ENCODE measurements at regions of chr7 and their contacts with region 1.

Region 1: DNA sequence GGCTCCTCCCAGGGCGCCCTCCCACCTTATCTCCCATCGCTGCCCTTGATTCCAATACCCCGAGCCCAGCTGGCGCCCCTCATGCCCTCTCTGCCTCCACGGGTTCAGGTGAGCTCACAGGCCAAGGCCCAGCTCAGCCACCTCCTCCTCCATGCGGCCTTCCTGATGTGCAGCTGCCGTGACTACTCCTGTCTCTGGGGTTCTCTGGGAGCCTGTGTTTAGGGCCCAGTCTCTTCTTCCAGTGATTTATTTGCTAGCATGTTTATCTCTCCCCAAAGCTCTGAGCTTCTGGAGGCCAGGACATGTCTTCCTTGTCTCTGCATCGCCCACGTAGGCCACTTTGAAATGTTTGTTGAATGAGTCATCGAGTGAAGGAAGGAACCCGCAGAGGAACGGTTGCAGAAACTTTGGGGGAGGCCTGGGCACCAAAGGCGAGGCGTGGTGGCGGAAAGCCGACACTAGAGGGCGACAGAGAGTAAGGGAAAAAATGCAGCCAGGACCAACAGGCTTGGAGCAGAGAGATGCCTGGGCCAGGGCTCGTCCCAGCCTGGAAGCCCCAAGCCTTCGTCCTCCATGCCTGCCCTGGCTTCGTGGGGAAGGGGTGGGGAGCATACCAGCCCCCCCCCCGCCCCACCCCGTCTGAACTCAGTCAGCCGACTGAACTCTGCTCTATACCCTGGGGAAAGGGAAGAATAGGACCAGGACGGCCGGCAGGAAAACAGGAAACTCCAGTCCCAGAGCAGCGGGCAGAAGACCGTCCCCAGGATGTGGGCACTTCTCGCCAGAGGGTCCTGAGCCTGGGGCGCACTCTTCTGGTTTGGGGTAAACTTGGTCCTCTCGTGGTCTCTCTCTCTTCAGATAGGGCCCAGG is 10.9 kb upstream of the HSPB1 start:
- DNase-seq: peak; percentile 92
- CTCF ChIP-seq: peak; percentile 98

Region 2: GRCh38 chr7:76302347-76303201 is 11.0 kb after region 1 on chr7 and contains the start of gene HSPB1:
- CTCF ChIA-PET with region 1: interaction called, 339 read pairs
- POLR2A ChIA-PET with region 1: interaction called, 7 read pairs
- DNase-seq: peak; percentile 91
- CTCF ChIP-seq: no peak